ENCODE measurements at regions of chr1 and their contacts with region 1.

Region 1: GRCh38 chr1:109397538-109398342 is at the start of gene SORT1:
- DNase-seq: peak; percentile 85
- H3K4me3 Mint-ChIP-seq: peak within 1 kb of the TSS; percentile 78
- H3K27ac Mint-ChIP-seq: no peak within 1 kb of the TSS
- H3K4me1 Mint-ChIP-seq: peaks cover 31% of the 10 kb centered on the region
- H3K27me3 Mint-ChIP-seq: no peaks in the 10 kb centered on the region
- CTCF ChIP-seq: no peak
- total RNA-seq, gene SORT1: 46.3 and 68.2 TPM in 2 replicates

Region 2: GRCh38 chr1:109263597-109264398 is 133.9 kb before region 1 on chr1:
- CTCF ChIA-PET with region 1: no interaction called
- intact Hi-C with region 1: loop called (anchors 1 kb)
- DNase-seq: peak; percentile 94
- H3K4me3 Mint-ChIP-seq: no peak overlapping the region
- H3K27ac Mint-ChIP-seq: no peak overlapping the region
- H3K4me1 Mint-ChIP-seq: peaks cover 7% of the 10 kb centered on the region
- H3K27me3 Mint-ChIP-seq: no peaks in the 10 kb centered on the region
- CTCF ChIP-seq: peak; percentile 95

Region 3: DNA sequence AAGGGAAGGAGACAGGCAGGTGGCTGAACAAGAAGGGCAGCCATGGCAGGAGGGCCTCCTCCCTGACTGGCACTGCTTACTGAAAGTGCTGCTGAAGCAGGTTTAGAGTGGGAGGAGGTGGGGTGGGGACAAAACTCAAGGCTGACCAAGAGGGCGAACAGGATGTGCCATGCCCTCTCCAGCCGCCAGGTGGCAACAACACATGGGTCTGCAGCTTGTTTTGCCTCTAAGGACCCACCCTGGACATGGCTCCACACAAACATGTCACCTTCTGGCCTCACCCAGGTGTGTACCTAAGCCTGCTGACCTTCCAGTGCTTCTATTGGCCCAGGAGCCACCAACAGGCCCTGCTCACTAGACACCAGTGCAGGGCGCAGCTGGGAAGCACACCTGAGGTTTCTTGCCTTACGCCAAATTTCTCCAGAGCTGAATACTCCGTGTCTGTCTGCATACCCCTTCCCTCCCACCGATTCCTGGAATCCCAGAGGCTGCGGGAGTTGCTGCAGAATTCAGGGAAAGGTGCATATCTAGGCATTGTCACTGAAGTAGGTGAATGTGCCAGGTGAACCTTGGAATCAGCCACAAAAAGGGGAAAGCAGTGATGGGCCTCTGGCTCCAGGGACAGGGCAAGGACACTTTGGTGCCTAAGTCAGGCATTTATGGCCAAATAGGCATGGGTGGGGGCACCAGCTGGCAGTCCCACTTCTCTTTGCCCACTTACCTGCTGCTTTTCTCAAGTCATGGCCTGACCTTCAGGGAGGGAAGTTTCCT is 120.1 kb before region 1 on chr1:
- CTCF ChIA-PET with region 1: interaction called, 4 read pairs
- intact Hi-C with region 1: loop called (anchors 2 kb)
- DNase-seq: peak; percentile 74
- H3K4me3 Mint-ChIP-seq: no peak overlapping the region
- H3K27ac Mint-ChIP-seq: peak overlapping the region; percentile 61
- H3K4me1 Mint-ChIP-seq: peaks cover 28% of the 10 kb centered on the region
- H3K27me3 Mint-ChIP-seq: no peaks in the 10 kb centered on the region
- CTCF ChIP-seq: peak; percentile 75

Region 4: GRCh38 chr1:109412551-109412950 is 14.8 kb after region 1 on chr1:
- CTCF ChIA-PET with region 1: no interaction called
- intact Hi-C with region 1: no loop called
- DNase-seq: no peak
- H3K4me3 Mint-ChIP-seq: no peak overlapping the region
- H3K27ac Mint-ChIP-seq: no peak overlapping the region
- H3K4me1 Mint-ChIP-seq: peaks cover 7% of the 10 kb centered on the region
- H3K27me3 Mint-ChIP-seq: no peaks in the 10 kb centered on the region
- CTCF ChIP-seq: no peak

Measured in Calu3 (cell line).